OCI-LY7 (cell line): ENCODE measurements at regions of chr11 and their contacts with region 1.

Region 1: GRCh38 chr11:122743949-122744348 is 88.4 kb downstream of the UBASH3B start:
- DNase-seq: peak; percentile 92
- H3K4me3 ChIP-seq: peak overlapping the region; percentile 53
- H3K27ac ChIP-seq: peak overlapping the region; percentile 85
- H3K4me1 ChIP-seq: peaks cover 89% of the 10 kb centered on the region
- CTCF ChIP-seq: no peak

Region 2: GRCh38 chr11:122717264-122717867 is 26.6 kb before region 1 on chr11:
- CTCF ChIA-PET with region 1: interaction called, 3 read pairs
- POLR2A ChIA-PET with region 1: interaction called, 13 read pairs
- intact Hi-C with region 1: no loop called
- DNase-seq: peak; percentile 90
- H3K4me3 ChIP-seq: peak overlapping the region; percentile 47
- H3K27ac ChIP-seq: peak overlapping the region; percentile 92
- H3K4me1 ChIP-seq: peaks cover 95% of the 10 kb centered on the region
- CTCF ChIP-seq: no peak

Region 3: GRCh38 chr11:122727101-122727929 is 16.6 kb before region 1 on chr11:
- CTCF ChIA-PET with region 1: interaction called, 6 read pairs
- POLR2A ChIA-PET with region 1: interaction called, 11 read pairs
- intact Hi-C with region 1: no loop called
- DNase-seq: peak; percentile 63
- H3K4me3 ChIP-seq: peak overlapping the region; percentile 42
- H3K27ac ChIP-seq: peak overlapping the region; percentile 74
- H3K4me1 ChIP-seq: peaks cover 70% of the 10 kb centered on the region
- CTCF ChIP-seq: no peak

Region 4: GRCh38 chr11:122733318-122733717 is 10.6 kb before region 1 on chr11:
- CTCF ChIA-PET with region 1: interaction called, 3 read pairs
- POLR2A ChIA-PET with region 1: interaction called, 12 read pairs
- intact Hi-C with region 1: no loop called
- DNase-seq: no peak
- H3K4me3 ChIP-seq: no peak overlapping the region
- H3K27ac ChIP-seq: no peak overlapping the region
- H3K4me1 ChIP-seq: peaks cover 46% of the 10 kb centered on the region
- CTCF ChIP-seq: no peak

Region 5: GRCh38 chr11:122769126-122769780 is 25.3 kb after region 1 on chr11:
- CTCF ChIA-PET with region 1: no interaction called
- POLR2A ChIA-PET with region 1: no interaction called
- intact Hi-C with region 1: no loop called
- DNase-seq: no peak
- H3K4me3 ChIP-seq: no peak overlapping the region
- H3K27ac ChIP-seq: no peak overlapping the region
- H3K4me1 ChIP-seq: peaks cover 3% of the 10 kb centered on the region
- CTCF ChIP-seq: no peak